Activated B cell treated with CpG ODN at 0.5 μM for 24 hours (primary cell): ENCODE measurements at regions of chr18 and their contacts with region 1.

Region 1: GRCh38 chr18:2680216-2680792 is 24.8 kb downstream of the SMCHD1 start:
- DNase-seq: no peak
- ATAC-seq: no peak
- H3K4me3 Mint-ChIP-seq: no peak overlapping the region
- H3K27ac Mint-ChIP-seq: peak overlapping the region; percentile 47
- H3K4me1 Mint-ChIP-seq: peaks cover 35% of the 10 kb centered on the region
- H3K27me3 Mint-ChIP-seq: no peaks in the 10 kb centered on the region
- CTCF ChIP-seq: no peak

Region 2: GRCh38 chr18:2662990-2663389 is 17.3 kb before region 1 on chr18:
- CTCF ChIA-PET with region 1: no interaction called
- POLR2A ChIA-PET with region 1: interaction called, 10 read pairs
- intact Hi-C with region 1: loop called (anchors 1 kb)
- DNase-seq: no peak
- ATAC-seq: peak; percentile 51
- H3K4me3 Mint-ChIP-seq: peak overlapping the region; percentile 58
- H3K27ac Mint-ChIP-seq: peak overlapping the region; percentile 78
- H3K4me1 Mint-ChIP-seq: peaks cover 69% of the 10 kb centered on the region
- H3K27me3 Mint-ChIP-seq: no peaks in the 10 kb centered on the region
- CTCF ChIP-seq: no peak

Region 3: DNA sequence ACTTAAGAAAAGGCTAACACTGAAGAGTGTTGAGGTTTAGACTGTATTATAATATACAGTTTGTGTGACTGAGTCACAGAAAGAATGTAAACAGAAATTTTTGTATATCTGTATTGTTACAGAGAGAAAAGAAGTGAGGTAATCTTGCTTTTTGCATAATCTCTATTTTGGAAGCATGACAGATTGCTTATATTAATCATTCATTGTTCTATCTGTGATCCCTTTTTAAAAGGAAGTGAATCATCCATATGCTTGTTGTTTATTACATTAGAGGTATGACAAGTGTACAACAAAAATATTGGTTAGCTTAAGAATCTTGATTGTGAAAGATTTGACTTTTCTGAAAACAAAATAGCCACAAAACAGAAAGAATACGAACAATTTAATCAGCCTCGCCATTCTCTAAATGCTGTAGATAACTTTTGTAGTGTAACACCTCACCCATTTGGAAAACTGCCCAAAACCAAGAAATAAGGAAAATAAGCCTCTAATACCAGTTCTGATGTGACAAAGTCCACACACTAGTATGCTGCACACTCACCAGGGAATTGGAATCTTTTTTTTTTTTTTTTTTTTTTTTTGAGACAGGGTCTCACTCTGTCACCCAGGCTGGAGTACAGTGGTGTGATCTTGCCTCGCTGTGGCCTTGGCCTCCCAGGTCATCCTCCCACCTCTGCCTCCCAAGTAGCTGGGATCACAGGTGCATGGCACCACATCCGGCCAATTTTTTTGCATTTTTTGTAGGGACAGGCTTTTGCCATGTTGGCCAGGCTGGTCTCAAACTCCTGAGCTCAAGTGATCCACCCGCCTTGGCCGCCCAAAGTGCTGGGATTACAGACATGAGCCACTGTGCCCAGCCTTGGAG is 424.1 kb after region 1 on chr18:
- CTCF ChIA-PET with region 1: no interaction called
- POLR2A ChIA-PET with region 1: no interaction called
- intact Hi-C with region 1: no loop called
- DNase-seq: no peak
- ATAC-seq: no peak
- H3K4me3 Mint-ChIP-seq: no peak overlapping the region
- H3K27ac Mint-ChIP-seq: no peak overlapping the region
- H3K4me1 Mint-ChIP-seq: no peaks in the 10 kb centered on the region
- H3K27me3 Mint-ChIP-seq: no peaks in the 10 kb centered on the region
- CTCF ChIP-seq: no peak